PC-3 (cell line): ENCODE measurements at regions of chr9 and their contacts with region 1.

Region 1: GRCh38 chr9:751137-752051 is 90.1 kb upstream of the DMRT1 start:
- DNase-seq: peak; percentile 65
- ATAC-seq: peak; percentile 56
- H3K4me3 ChIP-seq: peak overlapping the region; percentile 25; the same call in 1 of the 2 replicates
- H3K27ac ChIP-seq: peak overlapping the region; percentile 94
- H3K4me1 ChIP-seq: peaks cover 30% of the 10 kb centered on the region
- H3K27me3 ChIP-seq: no peaks in the 10 kb centered on the region
- CTCF ChIP-seq: no peak

Region 2: GRCh38 chr9:684054-684890 is 67.1 kb before region 1 on chr9:
- CTCF ChIA-PET with region 1: no interaction called
- POLR2A ChIA-PET with region 1: interaction called, 5 read pairs
- intact Hi-C with region 1: loop called (anchors 2 kb)
- DNase-seq: peak; percentile 53
- ATAC-seq: peak; percentile 25
- H3K4me3 ChIP-seq: peak overlapping the region; percentile 63
- H3K27ac ChIP-seq: peak overlapping the region; percentile 93
- H3K4me1 ChIP-seq: peaks cover 57% of the 10 kb centered on the region
- H3K27me3 ChIP-seq: no peaks in the 10 kb centered on the region
- CTCF ChIP-seq: no peak

Region 3: DNA sequence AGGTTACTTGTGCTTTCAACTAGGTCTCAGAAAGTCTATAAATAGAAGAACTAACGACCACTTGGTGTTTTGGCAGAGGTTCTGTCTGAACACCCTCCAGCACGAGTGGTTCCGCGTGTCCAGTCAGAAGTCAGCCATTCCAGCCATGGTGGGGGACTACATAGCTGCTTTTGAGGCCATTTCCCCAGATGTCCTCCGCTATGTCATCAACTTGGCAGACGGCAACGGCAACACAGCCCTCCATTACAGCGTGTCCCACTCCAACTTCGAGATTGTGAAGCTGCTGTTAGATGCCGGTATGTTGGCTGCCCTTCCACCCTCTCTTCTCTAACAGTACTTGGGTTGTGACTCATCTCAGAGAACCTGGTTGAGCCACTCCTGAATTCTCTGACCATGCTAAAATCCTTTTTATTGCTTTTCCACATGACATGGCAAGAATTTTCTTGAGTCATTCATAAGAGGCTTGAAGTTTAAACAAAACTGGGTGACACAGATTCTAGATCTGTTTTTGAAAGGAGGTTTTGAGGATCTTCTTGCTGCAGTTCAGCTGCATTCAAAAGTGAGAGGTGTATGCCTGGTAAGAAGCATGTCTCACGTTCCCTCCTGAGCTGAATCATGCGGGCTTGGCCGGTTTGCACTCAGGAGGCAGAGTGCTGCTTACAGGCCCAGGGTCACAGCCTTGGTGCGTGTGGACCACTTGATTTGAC is 13.0 kb before region 1 on chr9:
- CTCF ChIA-PET with region 1: no interaction called
- POLR2A ChIA-PET with region 1: interaction called, 4 read pairs
- intact Hi-C with region 1: loop called (anchors 2 kb)
- DNase-seq: peak; percentile 94
- ATAC-seq: peak; percentile 90
- H3K4me3 ChIP-seq: peak overlapping the region; percentile 26
- H3K27ac ChIP-seq: peak overlapping the region; percentile 94
- H3K4me1 ChIP-seq: peaks cover 34% of the 10 kb centered on the region
- H3K27me3 ChIP-seq: no peaks in the 10 kb centered on the region
- CTCF ChIP-seq: no peak

Region 4: GRCh38 chr9:784202-784601 is 32.8 kb after region 1 on chr9:
- CTCF ChIA-PET with region 1: no interaction called
- POLR2A ChIA-PET with region 1: no interaction called
- intact Hi-C with region 1: no loop called
- DNase-seq: no peak
- ATAC-seq: no peak
- H3K4me3 ChIP-seq: no peak overlapping the region
- H3K27ac ChIP-seq: no peak overlapping the region
- H3K4me1 ChIP-seq: no peaks in the 10 kb centered on the region
- H3K27me3 ChIP-seq: no peaks in the 10 kb centered on the region
- CTCF ChIP-seq: no peak